GM18951 (cell line): ENCODE measurements at regions of chr20 and their contacts with region 1.

Region 1: GRCh38 chr20:53939572-53940359 is 130.6 kb downstream of the BCAS1 start:
- POLR2A ChIP-seq: no peak

Region 2: GRCh38 chr20:52889225-52889624 is 1050.5 kb before region 1 on chr20:
- in situ Hi-C with region 1: no loop called
- POLR2A ChIP-seq: no peak

Region 3: DNA sequence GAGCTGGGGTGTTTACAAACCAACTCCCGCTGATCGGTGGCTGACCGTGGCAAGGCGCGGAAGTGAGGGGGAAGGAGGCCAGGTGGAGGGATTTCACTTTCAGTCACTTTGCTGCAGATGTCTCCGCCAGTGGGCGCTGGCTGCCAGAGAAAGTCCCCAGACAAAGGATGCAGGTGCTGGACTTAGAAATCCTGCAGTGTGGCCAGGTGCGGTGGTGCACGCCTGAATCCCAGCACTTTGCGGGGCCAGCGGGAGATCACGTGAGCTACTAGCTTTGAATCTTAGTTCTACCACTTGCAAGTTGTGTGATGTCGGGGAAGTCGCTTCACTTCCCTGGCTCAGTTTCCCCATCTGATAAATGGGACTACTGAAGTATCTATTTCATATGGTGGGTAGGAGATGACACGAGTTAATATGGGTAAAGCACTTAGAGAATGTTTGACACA is 526.6 kb before region 1 on chr20:
- in situ Hi-C with region 1: loop called (anchors 10 kb)
- POLR2A ChIP-seq: no peak

Region 4: GRCh38 chr20:53578492-53579222 is 361.1 kb before region 1 on chr20:
- in situ Hi-C with region 1: loop called (anchors 5 kb)
- POLR2A ChIP-seq: no peak

Region 5: GRCh38 chr20:54062812-54063280 is 123.1 kb after region 1 on chr20:
- in situ Hi-C with region 1: loop called (anchors 5 kb)
- POLR2A ChIP-seq: no peak

Region 6: DNA sequence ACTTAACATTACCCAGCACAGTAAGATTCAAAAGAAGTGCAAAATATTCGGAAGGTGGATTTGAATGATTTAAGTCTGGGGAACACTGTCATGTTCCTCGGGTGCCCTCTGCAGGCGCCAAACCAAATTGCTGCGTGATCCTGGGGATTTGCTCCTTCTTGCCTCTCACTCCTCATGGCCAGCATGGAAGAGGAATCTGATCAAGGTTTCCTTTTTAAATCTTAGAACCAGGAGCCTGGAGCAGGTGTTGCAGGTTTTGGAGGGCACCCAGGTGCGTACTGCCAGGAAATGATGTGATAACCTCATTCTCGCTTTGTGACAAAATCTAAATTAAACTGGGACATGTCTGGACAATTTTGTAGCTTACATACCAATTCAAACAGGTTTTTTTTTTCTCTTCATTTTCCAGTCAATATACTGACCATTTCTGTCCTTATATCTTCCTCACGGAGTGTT is 260.0 kb after region 1 on chr20:
- in situ Hi-C with region 1: loop called (anchors 10 kb)
- POLR2A ChIP-seq: no peak